AG04450 (cell line): ENCODE measurements at regions of chr16 and their contacts with region 1.

Region 1: DNA sequence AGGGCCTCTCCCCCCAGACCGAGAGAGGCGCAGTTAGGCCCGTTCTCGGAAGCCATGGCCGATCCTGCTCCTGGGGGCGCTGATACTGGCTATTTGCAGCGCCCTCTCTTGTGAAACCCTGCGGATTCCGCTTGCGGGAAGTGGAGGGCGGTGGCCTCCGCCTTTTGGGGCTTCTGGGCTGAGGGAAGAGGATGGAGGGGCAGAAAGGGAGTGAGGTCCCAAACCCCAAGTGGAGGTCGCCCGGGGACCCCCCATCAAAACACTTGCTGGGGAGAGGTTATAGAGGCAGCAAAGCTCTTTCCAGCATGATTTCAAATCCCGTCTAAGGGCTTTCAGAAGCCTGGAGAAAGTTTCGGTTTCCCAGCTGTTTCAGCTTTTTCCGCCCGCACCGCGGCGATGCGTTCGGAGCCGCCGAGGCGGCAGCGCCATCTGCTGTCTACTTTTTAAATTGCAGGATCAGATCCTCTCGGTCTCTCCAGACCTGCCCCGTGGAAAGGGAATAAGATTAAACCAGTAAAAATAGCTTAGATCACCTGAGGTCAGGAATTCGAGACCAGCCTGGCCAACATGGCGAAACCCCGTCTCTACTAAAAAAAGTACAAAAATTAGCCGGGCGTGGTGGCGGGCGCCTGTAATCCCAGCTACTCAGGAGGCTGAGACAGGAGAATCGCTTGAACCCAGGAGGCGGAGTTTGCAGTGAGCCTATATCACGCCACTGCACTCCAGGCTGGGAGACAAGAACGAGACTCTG is 15.8 kb downstream of the SNX20 start:
- DNase-seq: peak; percentile 32
- H3K4me3 ChIP-seq: peak overlapping the region; percentile 57
- H3K27ac ChIP-seq: no peak overlapping the region
- H3K27me3 ChIP-seq: no peaks in the 10 kb centered on the region
- CTCF ChIP-seq: peak; percentile 86

Region 2: DNA sequence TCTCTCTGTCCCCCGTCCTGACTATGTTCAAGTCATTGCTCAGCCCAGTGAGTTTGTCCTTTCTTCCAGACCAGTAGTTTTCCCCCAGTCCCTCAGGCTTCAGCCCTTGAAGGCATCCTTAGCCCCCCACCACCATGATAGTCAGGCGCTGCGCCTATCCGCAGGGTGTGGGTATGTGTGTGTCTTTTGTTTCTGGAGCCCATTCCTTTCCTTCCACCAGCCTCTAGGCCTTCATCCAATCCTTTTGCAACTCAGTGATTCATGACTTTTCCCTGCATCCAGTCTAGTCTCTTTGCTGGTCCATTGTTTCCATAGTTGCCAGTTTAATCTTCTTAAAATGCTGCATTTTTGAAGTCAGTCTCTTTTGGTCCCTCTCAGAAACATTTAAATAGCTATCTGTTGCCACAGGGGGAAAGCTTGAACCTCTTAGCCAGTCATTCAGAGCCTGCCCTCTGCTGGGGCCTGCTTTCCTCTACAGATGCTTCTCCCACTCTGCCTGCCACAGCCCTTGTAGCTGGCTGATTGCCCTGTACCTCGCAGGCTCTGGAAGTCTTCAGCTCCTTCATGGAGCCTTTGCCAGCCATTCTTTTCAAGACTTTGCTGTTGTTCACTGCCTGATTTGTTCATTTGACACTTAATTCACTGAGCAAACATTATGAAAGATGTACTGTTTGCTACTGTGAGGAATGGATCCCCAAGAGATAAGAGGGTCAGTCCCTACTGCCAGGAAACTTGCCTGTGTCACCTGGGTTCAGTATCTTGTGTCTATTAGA is 454.9 kb before region 1 on chr16:
- CTCF ChIA-PET with region 1: interaction called, 18 read pairs
- POLR2A ChIA-PET with region 1: no interaction called
- DNase-seq: peak; percentile 59
- H3K4me3 ChIP-seq: no peak overlapping the region
- H3K27ac ChIP-seq: no peak overlapping the region
- H3K27me3 ChIP-seq: no peaks in the 10 kb centered on the region
- CTCF ChIP-seq: peak; percentile 86

Region 3: DNA sequence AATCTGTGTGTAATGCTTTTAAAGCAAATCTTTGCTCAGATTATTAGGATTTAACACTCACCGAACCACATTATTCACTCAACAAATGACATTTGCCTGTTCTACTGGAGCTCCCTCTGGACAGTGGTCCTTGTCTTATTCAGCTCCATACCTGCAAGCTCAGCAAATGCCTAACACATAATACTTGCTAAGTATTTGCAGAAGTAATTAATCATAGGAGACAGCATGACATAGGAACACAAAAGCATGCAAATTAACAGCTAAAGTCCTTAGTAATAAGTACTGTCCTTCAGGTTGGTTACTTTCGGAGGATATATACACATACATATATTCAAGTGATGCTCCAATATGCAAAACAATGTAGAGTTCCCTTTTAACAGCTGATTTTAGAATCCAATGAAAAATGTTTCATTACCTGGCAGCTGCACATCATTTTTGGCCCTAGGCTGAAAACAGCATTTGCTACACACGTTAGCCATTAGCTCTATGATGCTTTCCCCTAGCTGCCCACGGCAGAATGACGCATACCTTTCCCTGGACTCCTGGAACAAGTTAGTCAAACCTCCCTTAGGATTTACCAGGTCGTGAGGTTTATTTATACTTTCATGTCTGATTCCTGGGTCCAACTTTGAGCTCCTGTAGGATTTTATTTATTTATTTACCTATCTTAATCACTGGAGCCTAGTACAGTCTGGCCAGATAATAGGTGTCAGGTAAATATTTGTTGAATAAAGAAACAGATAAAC is 305.1 kb before region 1 on chr16:
- CTCF ChIA-PET with region 1: interaction called, 12 read pairs
- POLR2A ChIA-PET with region 1: no interaction called
- DNase-seq: no peak
- H3K4me3 ChIP-seq: no peak overlapping the region
- H3K27ac ChIP-seq: no peak overlapping the region
- H3K27me3 ChIP-seq: no peaks in the 10 kb centered on the region
- CTCF ChIP-seq: no peak

Region 4: GRCh38 chr16:50611332-50611934 is 53.9 kb before region 1 on chr16:
- CTCF ChIA-PET with region 1: interaction called, 12 read pairs
- POLR2A ChIA-PET with region 1: no interaction called
- DNase-seq: no peak
- H3K4me3 ChIP-seq: no peak overlapping the region
- H3K27ac ChIP-seq: no peak overlapping the region
- H3K27me3 ChIP-seq: peaks cover 40% of the 10 kb centered on the region
- CTCF ChIP-seq: 0 out of 2 replicates have a peak, but pooled peaks have one; percentile 7

Region 5: GRCh38 chr16:50677351-50677750 is 12.0 kb after region 1 on chr16:
- CTCF ChIA-PET with region 1: interaction called, 25 read pairs
- POLR2A ChIA-PET with region 1: no interaction called
- DNase-seq: no peak
- H3K4me3 ChIP-seq: no peak overlapping the region
- H3K27ac ChIP-seq: no peak overlapping the region
- H3K27me3 ChIP-seq: no peaks in the 10 kb centered on the region
- CTCF ChIP-seq: 0 out of 2 replicates have a peak, but pooled peaks have one; percentile 12

Region 6: DNA sequence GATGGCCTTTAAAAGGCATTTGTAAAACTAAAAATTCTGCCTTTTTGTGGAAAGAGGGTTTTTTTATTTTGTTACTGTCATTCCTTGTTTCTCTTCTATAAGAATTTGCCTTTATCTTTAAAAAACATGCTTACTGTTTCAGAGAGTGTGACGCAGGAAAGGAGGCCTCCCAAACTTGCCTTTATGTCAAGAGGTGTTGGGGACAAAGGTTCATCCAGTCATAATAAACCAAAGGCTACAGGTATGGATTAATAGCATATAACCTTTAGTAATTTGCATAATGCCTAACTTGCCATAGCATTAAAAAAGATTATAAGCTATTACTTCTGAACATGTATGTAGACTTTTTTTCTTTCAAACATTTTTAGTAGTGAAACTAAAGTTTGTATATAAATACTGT is 110.7 kb after region 1 on chr16:
- CTCF ChIA-PET with region 1: interaction called, 11 read pairs
- POLR2A ChIA-PET with region 1: no interaction called
- DNase-seq: no peak
- H3K4me3 ChIP-seq: no peak overlapping the region
- H3K27ac ChIP-seq: no peak overlapping the region
- H3K27me3 ChIP-seq: no peaks in the 10 kb centered on the region
- CTCF ChIP-seq: no peak